ENCODE measurements at regions of chr4 and their contacts with region 1.

Region 1: DNA sequence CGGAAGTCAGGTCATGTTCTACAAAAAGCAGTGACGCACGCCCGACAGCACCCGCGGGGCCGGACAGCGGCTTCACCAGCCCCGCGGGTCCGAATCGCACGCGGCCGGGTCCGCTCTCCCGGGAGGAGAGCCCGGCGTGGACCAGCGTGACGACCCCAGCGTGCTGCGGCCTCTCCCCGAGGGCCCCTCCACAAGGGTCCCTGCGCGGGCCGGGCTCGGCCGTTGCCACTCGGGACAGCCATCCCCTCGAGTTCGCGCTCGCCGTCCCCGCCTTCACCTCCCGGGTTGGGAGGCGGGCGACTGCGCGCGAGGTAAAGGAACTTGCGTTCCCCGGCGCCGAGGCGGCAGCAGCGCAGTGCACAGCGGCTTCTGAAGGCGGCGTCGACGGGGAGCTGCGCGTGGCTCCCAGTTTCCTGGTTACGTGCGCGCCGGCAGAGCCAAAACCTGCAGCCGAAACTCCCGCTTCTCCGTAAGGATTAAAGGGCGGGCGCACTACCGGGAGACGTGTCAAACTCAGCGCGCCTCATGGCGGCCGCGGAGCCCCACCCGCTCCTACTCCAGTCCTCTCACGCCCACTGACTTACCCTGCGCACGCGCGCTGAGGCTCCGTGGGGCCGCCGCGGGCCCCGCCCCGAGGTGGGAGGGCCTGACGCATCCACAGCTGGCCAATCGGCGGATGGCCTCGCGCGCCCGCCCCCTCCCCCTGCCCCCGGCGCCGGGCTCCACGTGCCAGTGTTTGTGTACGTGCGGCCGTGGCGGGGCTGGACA is 416 bp upstream of the LRP2BP start:
- DNase-seq: peak; percentile 98
- ATAC-seq: peak; percentile 98

Region 2: GRCh38 chr4:185203486-185204237 is 192.5 kb before region 1 on chr4 and contains the start of gene CFAP97:
- intact Hi-C with region 1: loop called (anchors 10 kb)
- DNase-seq: peak; percentile 96
- ATAC-seq: peak; percentile 93
- total RNA-seq, gene CFAP97: 11.3 TPM

Region 3: DNA sequence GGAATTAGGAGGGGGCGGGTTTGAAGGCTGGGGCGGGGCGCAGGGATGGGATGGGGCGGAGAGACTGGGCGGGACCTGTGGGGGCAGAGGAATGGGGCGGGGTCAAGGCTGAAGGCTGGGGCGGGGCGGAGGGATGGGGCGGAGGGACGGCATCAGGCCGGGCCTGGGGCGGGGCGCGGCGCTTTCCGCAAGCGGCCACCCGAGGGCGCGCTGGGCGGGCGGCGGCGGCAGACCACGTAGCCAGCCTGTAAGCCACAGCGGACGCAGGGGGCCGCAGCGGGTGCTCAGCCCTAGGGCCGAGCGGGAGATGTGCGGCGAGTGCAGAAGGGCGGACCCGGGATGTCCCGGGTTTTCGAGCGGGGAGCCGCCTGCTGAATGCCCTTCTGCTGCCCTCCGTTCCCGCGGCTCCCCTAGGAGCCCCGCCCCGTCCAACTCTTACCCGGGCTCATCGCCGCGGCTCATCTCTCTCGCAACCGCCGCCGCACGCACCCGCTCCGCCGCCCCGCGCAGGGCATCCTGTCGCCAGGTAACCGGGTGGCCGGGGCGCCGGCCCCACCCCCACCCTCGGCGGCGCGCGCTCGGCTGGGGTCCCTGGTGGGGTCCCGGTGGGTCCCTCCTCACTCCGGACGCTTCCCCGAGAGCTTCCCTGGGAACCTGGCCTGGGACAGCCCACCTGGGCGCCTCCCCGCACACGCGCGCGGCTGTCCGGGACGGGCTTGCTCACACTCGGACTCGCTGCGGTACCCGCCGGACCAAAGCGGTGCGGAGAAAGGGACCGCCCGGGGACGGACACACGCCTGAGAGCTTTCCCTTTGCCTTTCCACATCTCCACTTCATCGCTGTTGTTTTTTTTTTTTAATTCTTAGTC is 75.3 kb after region 1 on chr4 and contains the start of gene CCDC110:
- intact Hi-C with region 1: no loop called
- DNase-seq: peak; percentile 94
- ATAC-seq: peak; percentile 97
- total RNA-seq, gene CCDC110: 1.6 TPM

Measured in Right ventricle myocardium superior (tissue), 1 donor.